Activated naive CD8-positive, alpha-beta T cell treated with anti-CD3 and anti-CD28 coated beads, Interleukin-2, amount 10 ng/mL, durations not matched to agents 7 days and 5 days (primary cell): ENCODE measurements at regions of chr4 and their contacts with region 1.

Region 1: DNA sequence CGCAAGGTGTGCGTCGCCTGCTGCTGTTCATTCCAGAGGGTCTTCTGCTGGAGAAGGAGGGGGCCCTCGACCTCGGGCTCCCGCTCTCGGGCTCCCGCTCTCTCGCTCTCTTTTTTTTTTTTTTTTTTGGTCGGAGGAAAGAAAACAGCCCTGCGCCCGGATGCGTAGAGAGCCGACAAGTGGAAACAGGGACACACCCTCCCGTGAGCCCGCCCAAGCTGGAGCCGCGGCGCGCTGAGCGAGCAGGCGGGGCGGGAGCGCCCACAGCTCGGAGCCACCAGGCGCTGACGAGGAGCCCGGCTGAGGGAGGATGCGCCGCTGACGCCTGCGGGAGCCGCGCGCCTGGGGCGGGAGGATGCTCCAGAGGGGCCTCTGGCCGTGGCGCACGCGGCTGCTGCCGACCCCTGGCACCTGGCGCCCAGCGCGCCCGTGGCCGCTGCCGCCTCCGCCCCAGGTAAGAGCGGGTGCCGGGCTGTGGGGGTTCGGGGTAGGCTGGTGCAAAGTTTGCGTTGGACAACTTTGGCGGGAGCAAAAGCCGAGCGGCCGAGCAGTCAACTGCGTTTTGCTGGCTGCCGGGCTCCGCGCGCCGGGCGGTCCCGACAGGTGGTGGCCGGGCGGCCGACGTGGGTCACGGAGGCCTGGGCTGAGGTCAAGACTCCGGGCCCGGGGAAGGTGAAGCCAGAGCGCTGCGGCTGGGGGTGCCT is at the start of gene MCUB:
- DNase-seq: peak; percentile 93
- ATAC-seq: peak; percentile 95
- H3K4me3 Mint-ChIP-seq: peak within 1 kb of the TSS; percentile 98
- H3K27ac Mint-ChIP-seq: peak within 1 kb of the TSS; percentile 99
- H3K4me1 Mint-ChIP-seq: peaks cover 44% of the 10 kb centered on the region
- H3K27me3 Mint-ChIP-seq: no peaks in the 10 kb centered on the region
- total RNA-seq, gene MCUB: 110 to 121 TPM

Region 2: GRCh38 chr4:109433205-109434006 is 126.7 kb before region 1 on chr4 and contains the start of gene SEC24B:
- POLR2A ChIA-PET with region 1: interaction called, 17 read pairs
- DNase-seq: peak; percentile 94
- ATAC-seq: peak; percentile 90
- H3K4me3 Mint-ChIP-seq: peak within 1 kb of the TSS; percentile 90
- H3K27ac Mint-ChIP-seq: peak within 1 kb of the TSS; percentile 83
- H3K4me1 Mint-ChIP-seq: peaks cover 37% of the 10 kb centered on the region
- H3K27me3 Mint-ChIP-seq: no peaks in the 10 kb centered on the region
- total RNA-seq, gene SEC24B: 27.0 to 28.5 TPM

Region 3: DNA sequence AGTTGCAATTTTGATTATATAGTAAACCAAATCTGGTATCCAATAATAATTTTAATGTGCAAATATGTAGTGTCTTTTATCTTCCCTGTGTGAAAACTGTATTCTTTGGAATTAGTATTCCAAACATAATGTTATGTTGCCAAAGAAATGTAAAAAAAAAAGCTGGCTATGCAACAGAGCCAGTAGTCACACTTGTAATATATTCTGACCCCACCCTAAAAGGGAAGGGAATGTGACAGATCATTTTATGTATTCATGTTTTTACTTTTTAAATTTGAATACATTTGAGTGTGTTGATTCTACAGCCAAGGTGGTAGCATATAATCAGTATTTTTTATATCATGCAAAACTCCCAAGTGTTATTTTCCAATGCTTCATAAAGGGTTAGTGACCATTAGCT is 28.0 kb before region 1 on chr4:
- POLR2A ChIA-PET with region 1: no interaction called
- DNase-seq: no peak
- ATAC-seq: no peak
- H3K4me3 Mint-ChIP-seq: no peak overlapping the region
- H3K27ac Mint-ChIP-seq: no peak overlapping the region
- H3K4me1 Mint-ChIP-seq: no peaks in the 10 kb centered on the region
- H3K27me3 Mint-ChIP-seq: no peaks in the 10 kb centered on the region

Region 4: GRCh38 chr4:109574102-109574850 is 14.1 kb after region 1 on chr4:
- POLR2A ChIA-PET with region 1: interaction called, 10 read pairs
- DNase-seq: no peak
- ATAC-seq: peak; percentile 55
- H3K4me3 Mint-ChIP-seq: peak overlapping the region; percentile 39
- H3K27ac Mint-ChIP-seq: no peak overlapping the region
- H3K4me1 Mint-ChIP-seq: peaks cover 37% of the 10 kb centered on the region
- H3K27me3 Mint-ChIP-seq: no peaks in the 10 kb centered on the region

Region 5: DNA sequence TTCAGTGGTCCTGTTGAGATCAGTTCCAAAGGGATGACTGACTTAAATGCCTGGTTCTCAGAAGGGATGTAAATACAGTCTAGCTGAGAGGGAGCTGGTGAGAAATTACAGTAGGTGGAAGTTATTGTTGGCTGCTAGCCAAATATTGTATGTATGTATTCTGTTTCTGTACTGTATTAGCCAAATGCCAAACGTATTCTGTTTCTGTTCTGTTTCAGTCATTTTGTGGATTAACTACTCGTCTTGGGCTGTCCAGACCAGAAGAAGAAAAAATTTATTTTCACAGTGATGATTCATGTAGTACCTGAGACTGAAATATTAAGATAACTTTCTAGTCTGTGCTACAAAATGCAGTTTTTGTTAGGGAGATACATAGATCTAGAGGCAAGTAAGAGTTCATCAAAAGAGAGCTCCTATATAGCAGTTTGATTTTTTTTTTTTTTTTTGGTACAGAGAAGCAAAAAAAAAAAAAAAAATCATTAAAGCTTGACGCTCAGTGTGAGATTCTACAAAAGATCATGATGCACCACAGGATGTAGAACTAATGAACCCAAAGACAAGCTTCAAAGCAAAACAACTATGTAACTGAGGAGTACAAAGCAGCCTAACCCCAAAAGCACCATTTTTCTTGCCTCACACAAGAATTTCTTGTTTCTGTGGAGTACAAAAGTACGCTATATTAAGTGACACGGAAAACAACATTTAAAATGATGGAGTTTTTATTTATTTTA is 88.3 kb after region 1 on chr4:
- POLR2A ChIA-PET with region 1: interaction called, 31 read pairs
- DNase-seq: no peak
- ATAC-seq: peak; percentile 86
- H3K4me3 Mint-ChIP-seq: peak overlapping the region; percentile 78
- H3K27ac Mint-ChIP-seq: peak overlapping the region; percentile 92
- H3K4me1 Mint-ChIP-seq: peaks cover 31% of the 10 kb centered on the region
- H3K27me3 Mint-ChIP-seq: no peaks in the 10 kb centered on the region

Region 6: DNA sequence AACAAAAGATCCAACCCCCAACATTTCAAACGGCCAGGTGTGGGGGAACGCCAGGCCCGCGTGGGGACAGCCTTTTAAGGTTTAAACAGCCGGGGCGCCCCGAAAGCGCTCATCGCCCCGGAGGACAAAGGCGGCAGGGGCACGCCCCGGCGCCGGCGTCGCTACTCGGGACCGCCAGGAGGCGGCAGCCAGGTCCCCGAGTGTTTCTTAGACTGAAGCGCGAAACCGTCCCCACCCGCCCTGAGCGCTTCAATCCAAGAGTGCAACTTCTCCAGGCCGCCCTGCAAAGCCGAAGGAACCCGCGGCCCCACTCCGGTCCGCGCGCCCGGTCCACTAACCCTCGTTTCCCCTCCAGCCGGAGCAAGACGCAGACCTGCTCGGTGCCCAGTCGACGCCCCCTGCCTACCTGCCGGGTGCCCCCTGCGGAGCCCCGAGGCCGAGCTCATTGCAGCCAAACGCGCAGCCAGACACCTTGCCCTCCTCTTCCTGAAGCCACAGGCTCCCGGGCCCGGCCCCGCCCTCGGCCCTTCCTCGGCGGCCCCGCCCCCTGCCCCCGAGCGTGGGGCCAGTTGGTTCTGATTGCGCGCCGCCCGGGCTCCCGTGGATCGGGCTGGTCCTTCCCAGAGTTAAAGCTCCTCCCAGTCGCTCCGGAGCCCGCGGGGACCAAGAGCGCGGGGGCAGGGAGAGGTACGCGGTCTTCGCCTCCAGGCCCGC is 143.0 kb after region 1 on chr4 and contains the start of gene CASP6:
- POLR2A ChIA-PET with region 1: interaction called, 22 read pairs
- DNase-seq: peak; percentile 84
- ATAC-seq: peak; percentile 90
- H3K4me3 Mint-ChIP-seq: peak within 1 kb of the TSS; percentile 96
- H3K27ac Mint-ChIP-seq: peak within 1 kb of the TSS; percentile 95
- H3K4me1 Mint-ChIP-seq: peaks cover 26% of the 10 kb centered on the region
- H3K27me3 Mint-ChIP-seq: no peaks in the 10 kb centered on the region
- total RNA-seq, gene CASP6: 25.5 to 35.5 TPM